ENCODE measurements at regions of chr14 and their contacts with region 1.

Region 1: GRCh38 chr14:87805315-87805723 is 187.7 kb downstream of the GALC start:
- DNase-seq: no peak
- ATAC-seq: no peak
- H3K4me3 ChIP-seq: no peak overlapping the region
- H3K27ac ChIP-seq: no peak overlapping the region
- H3K4me1 ChIP-seq: no peaks in the 10 kb centered on the region
- H3K27me3 ChIP-seq: no peaks in the 10 kb centered on the region
- CTCF ChIP-seq: peak; percentile 11 to 54 (median 35)
- POLR2A ChIP-seq: no peak

Region 2: GRCh38 chr14:87896393-87897380 is 91.4 kb after region 1 on chr14:
- in situ Hi-C with region 1: no loop called
- intact Hi-C with region 1: loop called (anchors 1 kb)
- DNase-seq: no peak
- ATAC-seq: peak in 1 of 2 donors; percentile 46
- H3K4me3 ChIP-seq: no peak overlapping the region
- H3K27ac ChIP-seq: no peak overlapping the region
- H3K4me1 ChIP-seq: no peaks in the 10 kb centered on the region
- H3K27me3 ChIP-seq: no peaks in the 10 kb centered on the region
- CTCF ChIP-seq: peak; percentile 15 to 68 (median 36)
- POLR2A ChIP-seq: no peak

Measured in gastrocnemius medialis (tissue), 4 donors.